Activated T-helper 2 cell treated with anti-CD3 and anti-CD28 coated beads, Interferon-gamma antibody, Interleukin-2, Interleukin-4, amounts not matched to agents 10 μg/mL and 5 μg/mL and 100 μg/mL, durations not matched to agents 14 hours and 24 hours and 36 hours (primary cell): ENCODE measurements at regions of chr6 and their contacts with region 1.

Region 1: GRCh38 chr6:136643850-136644596 is 93.8 kb upstream of the MAP7 start:
- DNase-seq: peak; percentile 65
- H3K4me3 Mint-ChIP-seq: no peak overlapping the region
- H3K27ac Mint-ChIP-seq: no peak overlapping the region
- H3K4me1 Mint-ChIP-seq: peaks cover 1% of the 10 kb centered on the region
- H3K27me3 Mint-ChIP-seq: no peaks in the 10 kb centered on the region

Region 2: GRCh38 chr6:136582711-136583471 is 61.1 kb before region 1 on chr6:
- intact Hi-C with region 1: loop called (anchors 1 kb)
- DNase-seq: no peak
- H3K4me3 Mint-ChIP-seq: no peak overlapping the region
- H3K27ac Mint-ChIP-seq: no peak overlapping the region
- H3K4me1 Mint-ChIP-seq: no peaks in the 10 kb centered on the region
- H3K27me3 Mint-ChIP-seq: no peaks in the 10 kb centered on the region

Region 3: DNA sequence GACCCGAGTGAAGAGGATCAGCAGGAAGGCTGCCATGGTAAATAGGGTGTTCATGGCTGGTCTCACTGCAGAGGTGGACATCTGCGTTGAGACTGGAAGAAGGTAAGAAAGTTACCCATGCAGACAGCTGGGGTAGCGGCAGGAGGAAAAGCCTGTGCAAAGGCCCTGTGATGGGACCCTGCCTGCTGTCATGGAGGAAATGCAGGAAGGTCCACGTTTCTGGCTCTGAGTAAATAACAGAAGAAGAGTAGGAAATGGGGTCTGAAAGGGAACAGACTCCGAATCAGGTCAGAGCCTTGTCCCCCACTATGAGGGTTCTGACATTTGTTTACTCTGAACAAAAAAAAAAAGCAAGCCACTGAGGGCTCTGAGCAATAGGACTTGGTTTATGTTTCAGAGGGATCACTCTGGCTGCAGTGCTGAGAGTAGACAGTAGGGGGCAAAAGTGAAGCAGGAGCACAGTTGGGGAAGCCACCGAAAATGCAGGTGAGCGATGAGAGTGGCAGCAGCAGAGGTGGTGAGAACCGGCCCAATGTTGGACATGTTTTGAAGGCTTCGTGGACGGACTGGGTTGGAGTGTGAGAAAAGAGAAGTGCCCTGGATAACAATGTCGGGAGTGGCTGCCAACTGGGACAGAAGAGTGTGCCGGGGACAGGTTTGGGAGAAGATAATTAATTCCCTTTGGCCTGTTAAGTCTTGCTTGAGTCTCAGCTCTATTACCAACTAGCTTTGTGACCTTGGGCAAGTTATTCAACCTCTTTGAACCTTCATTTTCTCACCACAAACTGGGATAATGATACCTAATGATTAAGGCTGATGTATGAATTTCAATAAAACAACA is 35.9 kb before region 1 on chr6:
- intact Hi-C with region 1: loop called (anchors 5 kb)
- DNase-seq: peak; percentile 65
- H3K4me3 Mint-ChIP-seq: no peak overlapping the region
- H3K27ac Mint-ChIP-seq: no peak overlapping the region
- H3K4me1 Mint-ChIP-seq: peaks cover 15% of the 10 kb centered on the region
- H3K27me3 Mint-ChIP-seq: no peaks in the 10 kb centered on the region

Region 4: GRCh38 chr6:136751522-136751956 is 107.5 kb after region 1 on chr6:
- intact Hi-C with region 1: loop called (anchors 2 kb)
- DNase-seq: peak; percentile 37
- H3K4me3 Mint-ChIP-seq: peak overlapping the region; percentile 66
- H3K27ac Mint-ChIP-seq: peak overlapping the region; percentile 70
- H3K4me1 Mint-ChIP-seq: peaks cover 71% of the 10 kb centered on the region
- H3K27me3 Mint-ChIP-seq: peaks cover 10% of the 10 kb centered on the region

Region 5: GRCh38 chr6:136822376-136823127 is 178.5 kb after region 1 on chr6 and contains the start of gene PEX7:
- intact Hi-C with region 1: loop called (anchors 1 kb)
- DNase-seq: peak; percentile 87
- H3K4me3 Mint-ChIP-seq: peak within 1 kb of the TSS; percentile 89
- H3K27ac Mint-ChIP-seq: peak within 1 kb of the TSS; percentile 85
- H3K4me1 Mint-ChIP-seq: peaks cover 11% of the 10 kb centered on the region
- H3K27me3 Mint-ChIP-seq: peaks cover 11% of the 10 kb centered on the region
- total RNA-seq, gene PEX7: 4.1 and 4.2 TPM in 2 replicates